ENCODE measurements at regions of chr14 and their contacts with region 1.

Region 1: GRCh38 chr14:74979442-74980361 is 23.0 kb upstream of the EIF2B2 start:
- DNase-seq: peak; percentile 76 to 83
- ATAC-seq: peak; percentile 51
- H3K4me3 ChIP-seq: no peak overlapping the region
- H3K27ac ChIP-seq: peak overlapping the region; percentile 8 to 90
- H3K4me1 ChIP-seq: no peaks in the 10 kb centered on the region
- H3K27me3 ChIP-seq: no peaks in the 10 kb centered on the region

Region 2: DNA sequence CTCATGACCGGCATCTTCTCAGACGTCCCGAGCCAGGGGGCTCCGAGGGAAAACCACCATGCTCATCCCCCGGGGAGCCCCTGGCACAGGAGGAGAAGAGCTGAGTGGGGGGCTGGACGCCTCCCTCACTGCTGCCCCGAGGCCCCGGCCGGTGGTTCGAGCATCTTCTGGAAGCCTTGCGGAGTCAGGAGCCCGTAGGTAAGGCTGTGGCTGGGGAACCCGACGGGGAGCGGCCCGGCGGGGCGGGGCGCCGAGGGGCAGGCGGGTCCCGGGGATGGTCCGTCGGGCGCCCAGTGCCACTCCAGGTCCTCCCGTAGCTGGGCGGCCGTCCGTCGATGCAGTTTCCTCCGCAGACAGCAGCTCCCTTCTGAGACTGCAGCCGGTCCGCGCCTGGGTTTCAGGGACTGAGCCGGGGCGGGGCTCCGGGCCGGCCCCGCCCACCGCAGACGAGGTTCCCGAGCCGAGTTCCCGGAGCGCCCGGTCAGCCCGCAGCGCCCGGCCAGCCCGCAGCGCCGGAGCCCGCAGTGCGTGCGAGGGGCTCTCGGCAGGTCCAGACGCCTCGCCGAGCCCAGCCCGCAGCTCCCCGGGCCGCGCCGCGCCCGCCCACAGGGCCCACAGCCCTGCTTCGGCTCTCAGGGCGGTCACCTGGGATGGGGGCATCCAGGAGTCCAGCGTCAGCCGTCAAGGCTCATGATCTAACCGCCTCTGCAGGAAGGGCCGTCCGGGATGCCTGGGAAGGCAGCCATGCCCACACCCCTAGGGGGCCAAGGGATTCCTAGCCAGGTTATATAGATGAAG is 24.3 kb before region 1 on chr14 and contains the start of gene PGF:
- intact Hi-C with region 1: loop called in 1 of 2 experiments (anchors 1 kb)
- DNase-seq: peak; percentile 83 to 92
- ATAC-seq: peak; percentile 81
- H3K4me3 ChIP-seq: peak within 1 kb of the TSS; percentile 15 to 42
- H3K27ac ChIP-seq: peak within 1 kb of the TSS in 1 of 2 donors; percentile 28
- H3K4me1 ChIP-seq: no peaks in the 10 kb centered on the region
- H3K27me3 ChIP-seq: no peaks in the 10 kb centered on the region
- total RNA-seq, gene PGF: 29.1 to 33.7 TPM